Breast epithelium (tissue), 4 donors: ENCODE measurements at regions of chr19 and their contacts with region 1.

Region 1: GRCh38 chr19:16851031-16851712 is 22.0 kb downstream of the SIN3B start:
- DNase-seq: no peak
- H3K4me3 ChIP-seq: no peak overlapping the region
- H3K27ac ChIP-seq: no peak overlapping the region
- H3K4me1 ChIP-seq: no peaks in the 10 kb centered on the region
- H3K27me3 ChIP-seq: no peaks in the 10 kb centered on the region
- CTCF ChIP-seq: no peak
- POLR2A ChIP-seq: no peak

Region 2: DNA sequence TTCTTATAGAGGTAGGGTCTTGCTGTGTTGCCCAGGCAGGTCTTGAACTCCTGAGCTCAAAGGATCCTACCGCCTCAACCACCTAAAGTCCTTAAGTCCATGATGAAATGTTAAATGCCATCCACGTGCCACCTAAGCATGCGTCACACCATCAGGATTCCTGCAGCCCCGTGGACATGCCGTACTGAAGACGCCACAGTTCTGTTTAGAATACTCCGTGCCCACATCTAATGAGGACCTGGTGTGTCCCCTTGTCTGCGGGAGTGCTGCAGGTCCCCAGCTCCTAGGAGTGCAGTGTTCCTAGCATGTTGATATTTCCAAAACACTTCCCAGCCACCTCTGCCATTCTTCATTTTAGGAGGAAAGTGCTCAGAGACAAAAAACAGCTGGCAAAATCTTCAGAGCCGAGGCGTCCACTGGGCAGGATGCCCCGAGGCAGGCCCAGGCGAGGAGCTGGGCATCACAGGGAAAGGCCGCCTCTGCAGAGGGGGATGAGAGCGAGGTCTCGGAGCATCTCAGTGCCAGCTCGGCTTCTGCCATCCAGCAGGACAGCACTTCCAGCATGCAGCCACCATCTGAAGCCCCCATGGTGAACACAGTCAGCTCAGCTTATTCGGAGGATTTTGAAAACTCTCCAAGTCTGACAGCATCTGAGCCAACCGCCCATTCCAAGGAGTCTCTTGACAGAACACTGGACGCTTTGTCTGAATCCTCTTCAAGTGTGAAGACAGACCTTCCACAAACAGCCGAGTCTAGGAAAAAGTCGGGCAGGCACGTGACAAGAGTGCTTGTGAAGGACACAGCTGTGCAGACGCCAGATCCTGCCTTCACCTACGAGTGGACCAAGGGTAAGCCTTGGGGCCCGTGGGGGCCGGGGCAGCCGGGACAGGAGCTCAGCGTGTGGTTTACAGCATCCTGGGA is 341.8 kb before region 1 on chr19:
- intact Hi-C with region 1: loop called (anchors 5 kb)
- DNase-seq: peak in 1 of 2 donors; percentile 90
- H3K4me3 ChIP-seq: peak overlapping the region in 2 of 3 donors; percentile 29 to 53
- H3K27ac ChIP-seq: peak overlapping the region; percentile 80 to 89
- H3K4me1 ChIP-seq: no peaks in the 10 kb centered on the region
- H3K27me3 ChIP-seq: no peaks in the 10 kb centered on the region
- CTCF ChIP-seq: no peak
- POLR2A ChIP-seq: no peak

Region 3: DNA sequence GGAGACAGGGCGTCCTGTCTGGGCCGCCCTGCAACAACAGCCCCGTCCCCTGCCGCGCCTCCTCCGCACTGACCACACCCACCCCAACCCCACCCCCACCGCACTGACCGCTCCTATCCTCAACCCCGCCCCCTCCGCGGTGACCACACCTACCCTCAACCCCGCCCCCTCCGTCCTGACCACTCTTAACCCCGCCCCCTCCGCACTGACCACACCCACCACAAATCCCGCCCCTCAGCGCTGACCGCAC is 45.7 kb after region 1 on chr19:
- intact Hi-C with region 1: loop called (anchors 1 kb)
- DNase-seq: no peak
- H3K4me3 ChIP-seq: peak overlapping the region; percentile 48 to 81 (median 62)
- H3K27ac ChIP-seq: peak overlapping the region; percentile 74 to 85
- H3K4me1 ChIP-seq: no peaks in the 10 kb centered on the region
- H3K27me3 ChIP-seq: no peaks in the 10 kb centered on the region
- CTCF ChIP-seq: no peak
- POLR2A ChIP-seq: no peak